ENCODE measurements at regions of chrX and their contacts with region 1.

Region 1: GRCh38 chrX:17046478-17047097 is 100.1 kb downstream of the REPS2 start:
- DNase-seq: peak; percentile 59
- ATAC-seq: peak; percentile 79
- H3K4me3 Mint-ChIP-seq: no peak overlapping the region
- H3K27ac Mint-ChIP-seq: no peak overlapping the region
- H3K4me1 Mint-ChIP-seq: no peaks in the 10 kb centered on the region
- H3K27me3 Mint-ChIP-seq: no peaks in the 10 kb centered on the region
- CTCF ChIP-seq: peak; percentile 27; the same call in 1 of the 2 replicates

Region 2: DNA sequence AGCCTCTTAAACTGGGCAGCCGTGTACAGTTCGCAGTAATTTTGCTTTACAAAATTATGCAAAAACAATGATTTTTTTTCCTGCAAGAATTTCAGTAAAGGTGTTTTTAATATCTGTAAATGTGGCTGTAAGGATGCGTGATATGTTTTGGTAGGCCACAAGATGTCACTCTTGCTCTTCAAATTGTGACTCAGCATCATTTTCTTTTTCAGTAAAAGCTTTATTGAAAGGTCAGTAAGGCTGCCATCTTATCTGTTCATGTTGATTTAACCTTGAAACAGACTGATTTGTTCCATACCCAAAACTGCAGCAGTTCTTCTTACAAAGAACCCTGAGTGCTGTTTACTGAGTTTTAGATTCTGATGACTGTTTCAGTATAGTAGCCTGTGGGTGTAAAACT is 220.4 kb before region 1 on chrX:
- CTCF ChIA-PET with region 1: interaction called, 11 read pairs
- POLR2A ChIA-PET with region 1: no interaction called
- DNase-seq: no peak
- ATAC-seq: no peak
- H3K4me3 Mint-ChIP-seq: no peak overlapping the region
- H3K27ac Mint-ChIP-seq: no peak overlapping the region
- H3K4me1 Mint-ChIP-seq: peaks cover 23% of the 10 kb centered on the region
- H3K27me3 Mint-ChIP-seq: no peaks in the 10 kb centered on the region
- CTCF ChIP-seq: no peak

Region 3: DNA sequence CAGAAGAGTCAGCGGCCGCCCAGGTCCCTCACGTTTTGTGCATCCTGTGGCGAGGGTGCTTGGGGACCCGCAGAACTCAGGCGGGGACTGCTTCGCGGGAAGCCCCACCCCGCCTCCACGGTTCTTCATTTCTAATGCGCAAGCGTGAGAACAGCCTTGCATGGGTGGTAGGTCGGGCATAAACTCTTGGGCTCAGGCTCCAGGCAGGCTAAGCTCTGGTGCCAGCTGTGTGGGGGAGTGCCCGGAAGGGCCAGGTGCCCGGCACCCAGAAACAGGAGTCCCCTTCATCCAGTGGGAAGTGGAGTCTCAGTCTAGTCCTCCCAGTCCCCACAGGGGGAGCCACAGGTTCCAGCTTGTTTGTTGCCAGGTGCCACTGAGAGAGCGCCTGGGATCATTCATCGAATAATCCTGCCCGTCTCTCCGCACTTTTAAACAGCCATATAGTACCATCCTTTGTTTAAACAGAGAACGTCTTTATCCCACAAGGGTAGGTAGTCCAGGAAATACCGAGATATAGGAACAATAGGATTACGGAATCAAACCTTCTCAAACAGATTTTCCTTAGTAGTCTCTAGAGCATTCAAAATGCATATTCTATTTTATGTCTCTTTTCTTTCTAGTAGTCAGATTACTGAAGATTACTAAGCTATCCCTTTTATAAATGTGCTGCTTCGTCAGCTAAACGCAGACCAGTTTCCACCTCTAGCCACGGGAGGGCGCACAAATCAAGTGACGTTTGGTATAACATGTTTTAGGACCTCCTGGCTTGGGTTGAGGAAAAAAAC is 163.7 kb before region 1 on chrX:
- CTCF ChIA-PET with region 1: interaction called, 71 read pairs
- POLR2A ChIA-PET with region 1: no interaction called
- DNase-seq: peak; percentile 64
- ATAC-seq: peak; percentile 94
- H3K4me3 Mint-ChIP-seq: peak overlapping the region; percentile 81
- H3K27ac Mint-ChIP-seq: no peak overlapping the region; the same call in 1 of the 2 replicates
- H3K4me1 Mint-ChIP-seq: 0 out of 2 replicates have a peak, but pooled peaks cover 3% of the 10 kb centered on the region
- H3K27me3 Mint-ChIP-seq: no peaks in the 10 kb centered on the region
- CTCF ChIP-seq: 0 out of 2 replicates have a peak, but pooled peaks have one; percentile 15

Region 4: DNA sequence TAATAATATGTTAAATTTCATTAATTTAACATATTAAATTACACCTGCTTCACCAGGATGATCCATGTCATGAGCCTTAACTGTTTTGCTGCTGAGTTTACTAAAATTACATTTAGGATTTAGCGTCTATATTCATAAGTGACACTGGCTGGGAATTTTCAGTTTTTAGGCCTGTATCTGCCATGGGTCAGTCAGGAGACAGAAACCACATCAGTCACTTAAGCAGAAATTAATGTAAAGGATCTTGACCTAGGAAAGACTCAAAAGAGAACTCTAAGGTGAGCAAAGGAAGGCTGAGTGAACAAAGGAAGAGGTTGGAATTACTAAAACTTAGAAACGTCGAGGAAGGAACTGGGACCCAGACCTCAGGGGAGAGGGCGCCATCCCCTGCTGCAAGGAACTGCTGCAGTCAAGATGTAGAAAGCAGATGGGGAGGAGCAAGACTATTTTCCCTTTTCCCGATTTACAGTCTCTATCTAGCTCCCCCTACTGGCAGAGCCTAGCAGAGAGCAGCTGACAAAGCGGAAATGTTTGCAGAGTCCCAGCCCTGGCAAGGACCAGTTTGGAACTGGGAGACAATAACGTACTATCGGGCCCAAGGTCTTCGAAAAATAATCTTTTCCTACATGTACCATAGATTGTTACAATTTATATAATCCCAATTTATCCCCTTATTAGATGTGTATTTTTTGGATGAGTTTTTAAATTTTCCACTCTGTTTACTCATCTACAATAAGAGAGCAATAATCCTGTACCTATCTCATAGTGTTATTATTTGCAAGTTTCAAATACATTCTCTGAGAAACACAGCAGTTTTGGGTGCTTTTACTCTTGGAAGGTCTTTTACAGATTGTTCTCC is 153.9 kb before region 1 on chrX:
- CTCF ChIA-PET with region 1: interaction called, 20 read pairs
- POLR2A ChIA-PET with region 1: no interaction called
- DNase-seq: peak; percentile 73
- ATAC-seq: peak; percentile 98
- H3K4me3 Mint-ChIP-seq: no peak overlapping the region
- H3K27ac Mint-ChIP-seq: peak overlapping the region; percentile 46; the same call in 1 of the 2 replicates
- H3K4me1 Mint-ChIP-seq: peaks cover 3% of the 10 kb centered on the region
- H3K27me3 Mint-ChIP-seq: no peaks in the 10 kb centered on the region
- CTCF ChIP-seq: peak; percentile 62

Region 5: DNA sequence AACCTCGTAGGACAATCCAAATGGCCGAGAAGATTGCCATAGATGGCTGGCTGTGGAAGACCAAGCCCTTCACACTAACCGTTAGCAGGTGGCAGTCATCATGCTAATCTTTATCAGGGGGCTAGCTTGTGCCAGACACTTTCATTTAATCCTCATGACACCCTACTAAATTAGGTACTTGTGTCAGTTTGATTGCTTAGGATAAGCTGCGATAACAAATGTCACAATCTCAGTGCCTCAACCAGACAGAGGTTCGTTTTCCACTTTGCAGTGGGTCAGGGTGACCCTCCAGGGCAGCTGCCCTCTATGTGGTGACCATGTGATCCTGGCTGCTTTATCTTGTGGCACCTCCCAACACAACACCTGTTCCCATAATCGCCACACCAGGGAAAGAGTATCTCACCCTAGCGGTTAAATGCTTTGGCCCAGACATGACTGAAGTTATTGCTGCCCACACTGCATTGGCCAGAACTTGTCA is 39.3 kb before region 1 on chrX:
- CTCF ChIA-PET with region 1: interaction called, 31 read pairs
- POLR2A ChIA-PET with region 1: no interaction called
- DNase-seq: peak; percentile 15
- ATAC-seq: peak; percentile 81
- H3K4me3 Mint-ChIP-seq: no peak overlapping the region
- H3K27ac Mint-ChIP-seq: no peak overlapping the region
- H3K4me1 Mint-ChIP-seq: peaks cover 4% of the 10 kb centered on the region; the same call in 1 of the 2 replicates
- H3K27me3 Mint-ChIP-seq: no peaks in the 10 kb centered on the region; the same call in 1 of the 2 replicates
- CTCF ChIP-seq: peak; percentile 17; the same call in 1 of the 2 replicates

Region 6: DNA sequence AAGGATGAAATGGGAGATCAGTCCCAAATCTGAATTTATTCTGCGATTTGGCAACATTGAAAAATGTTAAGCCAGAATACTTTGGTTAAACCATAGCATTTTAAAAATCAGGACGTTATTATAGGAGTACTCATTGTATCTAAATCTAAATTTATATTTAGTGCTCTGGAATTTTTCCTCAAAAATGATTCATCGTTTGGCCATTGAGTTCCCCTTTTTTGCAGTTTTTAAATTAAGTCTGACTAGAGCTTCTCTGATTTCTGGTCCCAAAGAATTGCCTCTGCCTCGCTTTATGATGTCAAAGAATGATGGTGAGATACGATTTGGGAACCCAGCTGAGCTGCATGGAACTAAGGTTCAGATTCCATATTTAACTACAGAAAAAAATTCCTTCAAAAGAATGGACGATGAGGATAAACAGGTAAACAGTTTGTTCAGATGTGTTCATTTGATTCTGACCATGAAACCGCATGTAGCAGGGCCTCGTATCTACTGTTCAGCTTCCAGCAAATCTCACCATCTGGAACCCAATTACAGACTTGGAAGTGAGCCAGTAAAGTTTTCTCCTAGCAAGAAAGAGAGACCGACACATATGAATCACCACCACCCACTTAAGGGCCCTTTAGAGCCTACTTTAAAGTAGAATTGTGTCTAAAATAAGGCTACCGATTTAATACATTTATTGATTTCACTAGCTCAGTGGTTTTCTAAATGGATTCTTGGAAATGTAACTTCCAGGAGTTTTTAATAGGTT is 24.6 kb before region 1 on chrX:
- CTCF ChIA-PET with region 1: interaction called, 10 read pairs
- POLR2A ChIA-PET with region 1: no interaction called
- DNase-seq: no peak
- ATAC-seq: no peak
- H3K4me3 Mint-ChIP-seq: no peak overlapping the region
- H3K27ac Mint-ChIP-seq: no peak overlapping the region
- H3K4me1 Mint-ChIP-seq: peaks cover 4% of the 10 kb centered on the region; the same call in 1 of the 2 replicates
- H3K27me3 Mint-ChIP-seq: no peaks in the 10 kb centered on the region
- CTCF ChIP-seq: no peak

Region 7: GRCh38 chrX:17095161-17095560 is 48.6 kb after region 1 on chrX:
- CTCF ChIA-PET with region 1: no interaction called
- POLR2A ChIA-PET with region 1: no interaction called
- DNase-seq: no peak
- ATAC-seq: no peak
- H3K4me3 Mint-ChIP-seq: no peak overlapping the region
- H3K27ac Mint-ChIP-seq: no peak overlapping the region
- H3K4me1 Mint-ChIP-seq: peaks cover 12% of the 10 kb centered on the region
- H3K27me3 Mint-ChIP-seq: no peaks in the 10 kb centered on the region; the same call in 1 of the 2 replicates
- CTCF ChIP-seq: no peak